ENCODE measurements at regions of chr18 and their contacts with region 1.

Region 1: GRCh38 chr18:46660955-46661749 is 4.1 kb upstream of the LOXHD1 start:
- DNase-seq: no peak
- ATAC-seq: no peak
- H3K4me3 Mint-ChIP-seq: no peak overlapping the region
- H3K27ac Mint-ChIP-seq: no peak overlapping the region
- H3K4me1 Mint-ChIP-seq: peaks cover 3% of the 10 kb centered on the region
- H3K27me3 Mint-ChIP-seq: peaks cover 14% of the 10 kb centered on the region

Region 2: DNA sequence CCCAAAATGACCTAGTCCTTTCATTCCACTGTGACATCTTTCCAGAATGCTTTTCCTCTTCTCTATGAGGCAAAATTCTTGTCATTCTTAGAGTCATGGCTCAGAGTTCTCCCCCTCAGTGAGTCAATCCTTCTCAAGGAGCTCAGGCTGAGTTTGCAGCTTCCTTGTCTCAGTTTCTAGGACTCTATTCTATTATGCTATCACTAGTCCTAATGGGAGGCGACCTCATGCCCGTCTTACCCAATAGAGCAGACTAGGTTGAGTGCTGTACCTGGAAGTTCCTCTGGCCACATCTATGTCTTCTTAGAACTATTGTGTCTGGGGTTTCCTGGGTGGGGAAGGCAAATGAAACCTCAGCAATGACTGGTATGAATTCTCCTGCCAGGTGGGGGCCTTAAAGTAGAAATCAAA is 505.5 kb before region 1 on chr18:
- CTCF ChIA-PET with region 1: interaction called, 19 read pairs
- POLR2A ChIA-PET with region 1: no interaction called
- DNase-seq: peak; percentile 85
- ATAC-seq: peak; percentile 89
- H3K4me3 Mint-ChIP-seq: peak overlapping the region; percentile 70
- H3K27ac Mint-ChIP-seq: peak overlapping the region; percentile 98
- H3K4me1 Mint-ChIP-seq: peaks cover 88% of the 10 kb centered on the region
- H3K27me3 Mint-ChIP-seq: no peaks in the 10 kb centered on the region

Region 3: DNA sequence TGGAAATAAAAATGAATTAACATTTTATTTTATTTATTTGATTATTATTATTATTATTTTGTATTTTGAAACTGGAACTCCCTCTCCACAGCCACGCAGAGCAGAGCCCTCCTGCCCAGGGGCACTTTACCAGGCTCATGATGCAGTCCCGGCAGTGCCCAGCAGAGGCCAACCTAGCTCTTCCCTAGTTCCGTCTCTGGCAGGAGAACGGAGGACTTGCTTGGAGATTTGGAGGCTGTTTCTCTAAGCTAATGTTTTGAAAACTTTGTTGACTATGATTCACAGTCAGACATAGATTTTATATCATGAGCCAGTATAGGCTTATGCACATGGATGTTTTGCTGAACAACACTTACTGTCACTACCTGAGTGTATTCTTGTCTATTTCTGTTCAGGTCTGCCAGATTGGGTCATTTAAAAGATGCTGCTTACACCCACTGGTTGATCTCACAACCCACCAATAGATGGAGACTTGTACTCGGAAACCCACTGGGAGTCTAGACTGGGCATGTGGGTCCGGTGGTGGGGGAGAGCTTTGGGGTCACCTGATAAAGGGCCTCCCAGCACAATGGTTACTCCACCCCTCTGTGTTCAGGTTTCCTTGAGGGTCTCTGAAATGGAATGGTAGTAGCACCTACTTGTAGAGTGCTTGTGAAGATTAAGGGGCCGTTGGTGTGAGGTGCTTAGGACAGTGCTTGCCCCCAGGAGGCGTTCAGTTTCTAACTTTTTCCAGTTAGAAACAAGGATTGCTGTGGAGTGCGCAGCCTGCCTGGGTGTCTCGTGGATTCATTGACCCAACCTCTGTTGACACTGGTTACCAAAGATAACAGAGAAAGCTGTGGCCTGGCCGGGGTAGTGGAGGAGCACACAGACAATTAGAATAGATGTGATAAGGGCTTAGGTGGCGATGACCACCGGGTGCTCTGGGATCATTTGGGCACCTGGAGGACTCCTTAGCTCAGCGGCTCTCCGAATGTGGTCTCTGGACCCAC is 379.7 kb before region 1 on chr18:
- CTCF ChIA-PET with region 1: interaction called, 115 read pairs
- POLR2A ChIA-PET with region 1: interaction called, 4 read pairs
- DNase-seq: peak; percentile 74
- ATAC-seq: peak; percentile 87
- H3K4me3 Mint-ChIP-seq: no peak overlapping the region
- H3K27ac Mint-ChIP-seq: no peak overlapping the region
- H3K4me1 Mint-ChIP-seq: peaks cover 15% of the 10 kb centered on the region
- H3K27me3 Mint-ChIP-seq: no peaks in the 10 kb centered on the region

Region 4: DNA sequence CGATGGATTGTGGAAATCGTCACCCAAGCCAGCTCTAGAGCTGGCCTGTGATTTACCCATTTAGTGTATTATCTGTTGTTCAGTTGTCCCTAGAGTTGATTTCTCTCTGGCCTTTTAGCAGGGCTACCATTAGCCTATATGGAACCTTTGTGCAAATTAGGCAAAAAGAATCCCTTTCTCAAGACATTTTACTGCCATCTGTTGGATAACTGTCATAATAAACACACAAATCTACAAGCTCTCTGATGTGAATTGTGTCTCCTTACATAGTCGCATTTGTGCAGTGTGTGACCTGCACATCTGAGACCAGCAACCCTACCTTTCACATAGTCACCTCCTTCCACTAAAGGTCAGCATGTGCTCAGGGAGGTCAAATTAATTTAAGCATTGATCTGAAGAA is 38.2 kb before region 1 on chr18:
- CTCF ChIA-PET with region 1: interaction called, 47 read pairs
- POLR2A ChIA-PET with region 1: no interaction called
- DNase-seq: no peak
- ATAC-seq: peak; percentile 43
- H3K4me3 Mint-ChIP-seq: no peak overlapping the region
- H3K27ac Mint-ChIP-seq: peak overlapping the region; percentile 88
- H3K4me1 Mint-ChIP-seq: peaks cover 46% of the 10 kb centered on the region
- H3K27me3 Mint-ChIP-seq: peaks cover 2% of the 10 kb centered on the region

Region 5: GRCh38 chr18:46649071-46649862 is 11.9 kb before region 1 on chr18:
- CTCF ChIA-PET with region 1: interaction called, 16 read pairs
- POLR2A ChIA-PET with region 1: no interaction called
- DNase-seq: no peak
- ATAC-seq: no peak
- H3K4me3 Mint-ChIP-seq: no peak overlapping the region
- H3K27ac Mint-ChIP-seq: no peak overlapping the region
- H3K4me1 Mint-ChIP-seq: no peaks in the 10 kb centered on the region
- H3K27me3 Mint-ChIP-seq: peaks cover 16% of the 10 kb centered on the region

Measured in activated CD8-positive, alpha-beta T cell treated with anti-CD3 and anti-CD28 coated beads, Interleukin-2, amount 10 ng/mL, durations not matched to agents 7 days and 5 days (primary cell).